GM12878 (cell line): ENCODE measurements at regions of chr19 and their contacts with region 1.

Region 1: DNA sequence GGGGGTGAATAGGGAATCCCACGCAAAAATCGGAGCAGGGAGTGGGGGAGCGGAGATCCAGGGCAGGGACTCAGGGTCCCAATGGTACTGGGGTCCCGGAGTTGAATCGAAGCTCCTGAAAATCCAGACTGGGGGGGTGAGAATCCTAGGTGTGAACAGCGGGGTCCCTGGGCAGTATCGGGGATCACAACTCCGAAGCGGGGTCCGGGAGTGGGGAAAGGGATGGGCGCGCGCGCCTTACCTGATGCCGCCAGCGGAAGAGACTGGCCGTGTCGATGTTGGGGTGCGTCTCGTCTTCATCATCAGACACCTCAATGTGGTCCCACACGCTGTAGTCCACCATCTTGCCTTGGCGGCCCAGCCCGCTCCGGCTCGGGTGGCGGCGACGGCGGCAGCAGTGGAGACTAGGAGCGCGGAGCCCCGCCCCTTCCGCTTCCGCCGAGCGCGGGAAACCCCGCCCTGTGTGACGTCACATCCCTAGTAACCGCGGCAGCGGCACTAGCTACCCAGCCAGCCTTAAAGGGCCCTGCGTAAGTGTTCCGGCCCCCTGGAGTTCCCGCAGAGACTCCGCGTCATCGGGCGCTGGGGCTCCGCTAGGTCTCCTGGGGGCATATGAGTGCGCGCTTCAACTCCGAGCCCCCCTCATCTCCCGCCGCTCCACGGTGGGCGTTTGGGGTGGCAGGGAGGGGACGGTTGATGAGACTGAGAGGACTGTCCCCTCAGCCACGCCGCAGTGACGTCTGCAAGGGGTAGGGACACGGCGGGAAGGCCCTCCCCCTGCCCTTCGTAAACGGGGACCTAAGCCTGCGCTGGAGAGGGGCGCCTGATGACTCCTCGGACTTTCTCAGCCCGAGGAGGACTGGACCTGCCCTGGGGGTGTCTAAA is at the start of gene CDC37:
- DNase-seq: peak; percentile 80
- ATAC-seq: peak; percentile 84
- H3K4me3 ChIP-seq: peak within 1 kb of the TSS; percentile 95
- H3K27ac ChIP-seq: peak within 1 kb of the TSS; percentile 82
- H3K4me1 ChIP-seq: peaks cover 34% of the 10 kb centered on the region
- H3K27me3 ChIP-seq: peaks cover 0 to 3% of the 10 kb centered on the region in 2 experiments; a peak in 2 of 4 replicates
- CTCF ChIP-seq: no peak
- EP300 ChIP-seq: no peak
- POLR2A ChIP-seq: peak; percentile 98
- RAD21 ChIP-seq: no peak
- polyA plus RNA-seq, gene CDC37: 4.7 to 8.8 TPM

Region 2: DNA sequence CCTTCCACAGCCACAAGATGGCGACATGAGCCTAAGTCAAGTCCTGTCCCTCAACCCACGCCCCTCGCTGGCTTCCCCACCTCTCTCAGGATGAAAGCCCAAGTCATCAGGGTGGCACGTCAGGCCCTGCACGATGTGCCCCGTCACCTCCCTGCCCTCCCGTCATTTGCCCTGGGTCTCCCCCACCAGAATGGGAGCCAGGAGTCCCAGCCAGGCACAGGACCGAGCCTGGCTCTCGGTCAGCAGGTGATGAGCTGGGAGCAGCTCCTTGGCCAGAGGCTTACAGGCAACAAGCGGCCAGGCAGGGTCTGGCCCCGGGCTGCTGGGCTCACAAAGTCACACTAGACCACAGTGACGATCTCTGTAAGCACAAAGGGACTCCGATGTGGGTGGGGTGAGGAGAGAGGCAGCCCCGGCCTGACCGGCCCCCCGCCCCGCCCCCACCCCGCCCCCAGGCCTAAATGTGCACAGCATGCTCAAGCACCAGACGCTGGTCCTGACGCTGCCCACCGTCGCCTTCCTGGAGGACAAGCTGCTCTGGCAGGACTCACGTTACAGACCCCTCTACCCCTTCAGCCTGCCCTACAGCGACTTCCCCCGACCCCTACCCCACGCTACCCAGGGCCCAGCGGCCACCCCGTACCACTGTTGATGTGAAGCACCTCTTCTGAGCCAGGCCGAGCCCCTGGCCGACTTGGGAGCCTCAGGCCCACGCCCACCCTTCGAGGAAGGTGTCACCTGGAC is 144.0 kb before region 1 on chr19:
- CTCF ChIA-PET with region 1: interaction called, 18 read pairs
- POLR2A ChIA-PET with region 1: no interaction called
- RAD21 ChIA-PET with region 1: interaction called, 4 read pairs
- SMC1A ChIA-PET with region 1: interaction called, 6 read pairs
- in situ Hi-C with region 1: no loop called
- intact Hi-C with region 1: no loop called
- DNase-seq: no peak
- ATAC-seq: peak; percentile 91
- H3K4me3 ChIP-seq: no peak overlapping the region
- H3K27ac ChIP-seq: 0 out of 2 replicates have a peak overlapping the region, but pooled peaks have one; percentile 27
- H3K4me1 ChIP-seq: peaks cover 11% of the 10 kb centered on the region
- H3K27me3 ChIP-seq: no peaks in the 10 kb centered on the region
- CTCF ChIP-seq: peak; percentile 71 to 75 (median 73)
- EP300 ChIP-seq: no peak
- POLR2A ChIP-seq: peak; percentile 72
- RAD21 ChIP-seq: peak; percentile 74

Region 3: DNA sequence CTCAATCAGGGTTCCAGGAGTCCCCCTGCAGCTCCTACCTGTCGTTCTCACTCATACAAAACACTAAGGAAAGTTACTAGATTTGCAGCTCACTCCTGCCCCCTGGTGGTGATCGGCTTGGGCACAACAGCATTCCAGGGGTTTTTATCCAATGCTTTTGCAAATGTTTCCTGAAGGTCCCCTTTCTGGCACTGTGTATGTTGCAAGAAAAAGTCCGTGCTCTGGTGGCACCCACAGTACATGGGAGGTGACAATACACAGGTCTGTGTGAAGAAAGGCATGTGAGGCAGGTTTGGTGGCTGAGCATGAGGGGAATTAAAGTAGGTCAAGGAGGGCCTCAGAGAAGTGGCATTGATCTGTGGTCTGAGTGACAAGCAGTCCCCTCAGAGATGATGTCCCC is 14.4 kb before region 1 on chr19:
- CTCF ChIA-PET with region 1: interaction called, 28 read pairs
- POLR2A ChIA-PET with region 1: interaction called, 6 read pairs
- RAD21 ChIA-PET with region 1: interaction called, 5 read pairs
- SMC1A ChIA-PET with region 1: interaction called, 3 read pairs
- in situ Hi-C with region 1: no loop called
- intact Hi-C with region 1: no loop called
- DNase-seq: peak; percentile 69
- ATAC-seq: peak; percentile 53
- H3K4me3 ChIP-seq: no peak overlapping the region
- H3K27ac ChIP-seq: no peak overlapping the region
- H3K4me1 ChIP-seq: peaks cover 10% of the 10 kb centered on the region
- H3K27me3 ChIP-seq: no peaks in the 10 kb centered on the region
- CTCF ChIP-seq: peak; percentile 88 to 95 (median 92)
- EP300 ChIP-seq: no peak
- POLR2A ChIP-seq: peak; percentile 46; the same call in 1 of the 2 replicates
- RAD21 ChIP-seq: peak; percentile 84

Region 4: GRCh38 chr19:10424011-10424637 is 20.7 kb after region 1 on chr19:
- CTCF ChIA-PET with region 1: interaction called, 1,053 read pairs
- POLR2A ChIA-PET with region 1: interaction called, 122 read pairs
- RAD21 ChIA-PET with region 1: interaction called, 209 read pairs
- SMC1A ChIA-PET with region 1: interaction called, 364 read pairs
- in situ Hi-C with region 1: no loop called
- intact Hi-C with region 1: loop called (anchors 2 kb)
- DNase-seq: no peak
- ATAC-seq: peak; percentile 63
- H3K4me3 ChIP-seq: peak overlapping the region; percentile 62
- H3K27ac ChIP-seq: 0 out of 2 replicates have a peak overlapping the region, but pooled peaks have one; percentile 42
- H3K4me1 ChIP-seq: peaks cover 64% of the 10 kb centered on the region
- H3K27me3 ChIP-seq: peaks cover 0 to 10% of the 10 kb centered on the region in 2 experiments; a peak in 3 of 4 replicates
- CTCF ChIP-seq: peak; percentile 77 to 97 (median 84)
- EP300 ChIP-seq: 0 out of 4 replicates have a peak, but pooled peaks of 1 of the 2 experiments have one; percentile 2
- POLR2A ChIP-seq: no peak
- RAD21 ChIP-seq: peak; percentile 39; the same call in 1 of the 2 replicates

Region 5: DNA sequence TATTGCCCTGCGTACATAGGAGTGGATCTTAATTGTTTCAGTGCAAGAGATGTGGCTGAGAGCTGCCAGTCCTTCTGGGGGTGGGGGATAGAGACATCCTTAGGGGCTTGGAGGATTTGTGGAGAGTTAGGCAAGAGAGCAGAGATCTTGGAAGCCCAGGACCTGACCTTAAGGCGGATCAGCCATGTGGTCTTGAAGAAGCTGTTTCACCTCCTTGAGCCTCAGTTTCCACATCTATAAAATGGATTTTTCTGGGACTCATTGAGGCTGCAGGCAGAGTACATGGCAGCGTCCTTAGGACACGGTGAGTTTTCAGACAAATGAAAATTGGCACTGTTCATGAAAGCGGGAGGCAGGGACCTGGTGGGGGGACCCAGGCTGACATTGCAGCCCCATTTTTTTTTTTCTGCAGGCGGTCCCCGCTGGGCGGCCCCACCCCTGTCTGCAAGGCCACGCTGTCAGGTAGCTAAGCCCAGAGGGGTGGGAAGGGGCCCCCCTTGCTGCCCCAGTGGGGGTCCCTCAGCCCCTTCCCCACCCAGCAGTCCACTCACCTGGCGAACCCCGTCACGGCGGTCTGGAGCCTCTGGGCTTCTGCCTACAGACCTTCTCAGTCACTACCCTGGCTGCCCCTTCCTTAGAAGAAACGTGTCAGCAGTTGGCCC is 46.9 kb after region 1 on chr19:
- CTCF ChIA-PET with region 1: no interaction called
- POLR2A ChIA-PET with region 1: no interaction called
- RAD21 ChIA-PET with region 1: no interaction called
- SMC1A ChIA-PET with region 1: no interaction called
- in situ Hi-C with region 1: no loop called
- intact Hi-C with region 1: no loop called
- DNase-seq: no peak
- ATAC-seq: no peak
- H3K4me3 ChIP-seq: no peak overlapping the region
- H3K27ac ChIP-seq: no peak overlapping the region
- H3K4me1 ChIP-seq: no peaks in the 10 kb centered on the region
- H3K27me3 ChIP-seq: no peaks in the 10 kb centered on the region
- CTCF ChIP-seq: no peak
- EP300 ChIP-seq: no peak
- POLR2A ChIP-seq: no peak
- RAD21 ChIP-seq: no peak

Region 6: DNA sequence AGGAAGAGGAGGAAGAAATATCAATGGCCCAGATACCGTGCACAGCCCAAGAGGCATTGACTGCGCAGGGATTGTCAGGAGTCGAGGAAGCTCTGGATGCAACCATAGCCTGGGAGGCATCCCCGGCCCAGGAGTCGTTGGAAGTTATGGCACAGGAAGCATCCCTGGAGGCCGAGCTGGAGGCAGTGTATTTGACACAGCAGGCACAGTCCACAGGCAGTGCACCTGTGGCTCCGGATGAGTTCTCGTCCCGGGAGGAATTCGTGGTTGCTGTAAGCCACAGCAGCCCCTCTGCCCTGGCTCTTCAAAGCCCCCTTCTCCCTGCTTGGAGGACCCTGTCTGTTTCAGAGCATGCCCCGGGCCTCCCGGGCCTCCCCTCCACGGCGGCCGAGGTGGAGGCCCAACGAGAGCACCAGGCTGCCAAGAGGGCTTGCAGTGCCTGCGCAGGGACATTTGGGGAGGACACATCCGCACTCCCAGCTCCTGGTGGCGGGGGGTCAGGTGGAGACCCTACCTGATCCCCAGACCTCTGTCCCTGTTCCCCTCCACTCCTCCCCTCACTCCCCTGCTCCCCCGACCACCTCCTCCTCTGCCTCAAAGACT is 63.8 kb after region 1 on chr19:
- CTCF ChIA-PET with region 1: no interaction called
- POLR2A ChIA-PET with region 1: no interaction called
- RAD21 ChIA-PET with region 1: no interaction called
- SMC1A ChIA-PET with region 1: no interaction called
- in situ Hi-C with region 1: no loop called
- intact Hi-C with region 1: no loop called
- DNase-seq: no peak
- ATAC-seq: no peak
- H3K4me3 ChIP-seq: no peak overlapping the region
- H3K27ac ChIP-seq: no peak overlapping the region
- H3K4me1 ChIP-seq: no peaks in the 10 kb centered on the region
- H3K27me3 ChIP-seq: no peaks in the 10 kb centered on the region
- CTCF ChIP-seq: no peak
- EP300 ChIP-seq: no peak
- POLR2A ChIP-seq: no peak
- RAD21 ChIP-seq: no peak

Region 7: DNA sequence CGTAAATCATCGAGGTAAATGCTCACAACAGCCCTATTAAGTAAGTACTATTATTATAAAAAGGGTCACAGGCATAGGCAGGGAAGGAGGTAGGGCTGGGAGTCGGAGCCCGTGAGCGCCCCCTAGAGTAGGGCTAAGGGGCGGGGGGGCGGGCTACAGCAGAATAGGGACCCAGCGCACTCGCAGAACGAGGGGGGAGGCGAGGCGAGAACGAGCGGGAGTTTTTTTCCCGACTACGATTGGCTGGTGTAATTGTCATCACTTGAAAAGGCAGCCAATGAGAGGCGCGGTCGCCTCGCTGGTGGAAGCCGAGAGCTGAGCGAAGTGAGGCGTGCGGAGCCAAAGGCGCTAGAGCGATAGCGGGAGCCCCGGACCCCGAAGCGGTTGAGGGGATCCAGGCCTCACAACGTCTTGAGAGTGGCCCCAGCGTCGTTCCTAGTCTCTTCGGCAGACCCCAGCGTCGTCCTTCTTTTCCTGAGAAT is 75.6 kb after region 1 on chr19:
- CTCF ChIA-PET with region 1: interaction called, 7 read pairs
- POLR2A ChIA-PET with region 1: no interaction called
- RAD21 ChIA-PET with region 1: interaction called, 7 read pairs
- SMC1A ChIA-PET with region 1: interaction called, 5 read pairs
- in situ Hi-C with region 1: no loop called
- intact Hi-C with region 1: loop called (anchors 5 kb)
- DNase-seq: no peak
- ATAC-seq: peak; percentile 70
- H3K4me3 ChIP-seq: no peak overlapping the region
- H3K27ac ChIP-seq: no peak overlapping the region
- H3K4me1 ChIP-seq: no peaks in the 10 kb centered on the region
- H3K27me3 ChIP-seq: no peaks in the 10 kb centered on the region; a peak in 1 of 4 replicates
- CTCF ChIP-seq: peak; percentile 16 to 56 (median 27); a peak in 5 of 6 replicates
- EP300 ChIP-seq: no peak
- POLR2A ChIP-seq: no peak
- RAD21 ChIP-seq: peak; percentile 10; the same call in 1 of the 2 replicates

Region 8: DNA sequence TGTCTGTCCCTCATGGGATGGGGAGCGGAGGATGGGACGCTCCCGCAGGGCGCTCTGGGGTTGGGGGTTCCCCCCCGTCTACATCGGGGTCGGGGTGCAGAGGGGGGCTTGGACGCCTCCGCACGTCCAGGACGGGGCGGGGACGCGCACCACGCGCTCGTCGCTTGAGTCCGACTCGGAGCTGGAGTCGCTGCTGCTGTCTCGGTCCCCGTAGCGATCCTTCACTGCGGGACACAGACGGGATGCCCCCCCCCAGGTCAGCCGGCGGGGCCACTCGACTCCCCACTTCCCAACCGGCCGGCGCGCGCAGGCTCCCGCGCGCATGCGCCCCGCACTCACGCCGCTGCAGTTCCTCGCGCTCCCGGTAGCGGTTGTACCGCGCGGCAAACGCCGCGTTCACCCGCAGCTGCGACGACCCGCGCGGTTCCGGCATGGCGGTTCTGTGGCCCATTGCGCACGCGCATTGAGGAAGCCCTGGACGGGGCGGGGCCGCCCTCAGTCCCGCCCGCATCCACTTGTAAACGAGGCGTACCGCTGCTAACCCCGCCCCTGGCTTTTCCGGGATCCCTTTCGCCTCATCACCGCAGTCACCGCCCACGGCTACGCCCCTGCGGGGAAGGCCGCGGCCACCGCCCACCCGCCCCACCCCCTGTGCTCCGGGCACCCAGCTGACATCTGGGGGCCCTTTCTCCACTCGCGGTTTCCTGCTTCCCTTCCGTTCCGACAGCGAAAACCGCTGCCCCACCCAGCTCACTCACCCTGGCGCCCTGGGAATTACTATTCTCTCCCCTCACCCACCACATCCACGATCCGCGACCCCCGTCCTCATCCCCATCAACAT is 162.4 kb after region 1 on chr19 and contains the start of gene KRI1:
- CTCF ChIA-PET with region 1: interaction called, 3 read pairs
- POLR2A ChIA-PET with region 1: interaction called, 3 read pairs
- RAD21 ChIA-PET with region 1: interaction called, 7 read pairs
- SMC1A ChIA-PET with region 1: interaction called, 3 read pairs
- in situ Hi-C with region 1: no loop called
- intact Hi-C with region 1: loop called (anchors 5 kb)
- DNase-seq: peak; percentile 88
- ATAC-seq: peak; percentile 69
- H3K4me3 ChIP-seq: peak within 1 kb of the TSS; percentile 80
- H3K27ac ChIP-seq: peak within 1 kb of the TSS; percentile 88
- H3K4me1 ChIP-seq: peaks cover 23% of the 10 kb centered on the region
- H3K27me3 ChIP-seq: no peaks in the 10 kb centered on the region
- CTCF ChIP-seq: peak in 2 of 3 experiments; percentile 5 to 24; a peak in 1 of 6 replicates
- EP300 ChIP-seq: peak in 1 of 2 experiments; percentile 10; a peak in 1 of 4 replicates
- POLR2A ChIP-seq: peak; percentile 93
- RAD21 ChIP-seq: no peak
- polyA plus RNA-seq, gene KRI1: 0.98 to 3.4 TPM